ENCODE measurements at regions of chr5 and their contacts with region 1.

Region 1: DNA sequence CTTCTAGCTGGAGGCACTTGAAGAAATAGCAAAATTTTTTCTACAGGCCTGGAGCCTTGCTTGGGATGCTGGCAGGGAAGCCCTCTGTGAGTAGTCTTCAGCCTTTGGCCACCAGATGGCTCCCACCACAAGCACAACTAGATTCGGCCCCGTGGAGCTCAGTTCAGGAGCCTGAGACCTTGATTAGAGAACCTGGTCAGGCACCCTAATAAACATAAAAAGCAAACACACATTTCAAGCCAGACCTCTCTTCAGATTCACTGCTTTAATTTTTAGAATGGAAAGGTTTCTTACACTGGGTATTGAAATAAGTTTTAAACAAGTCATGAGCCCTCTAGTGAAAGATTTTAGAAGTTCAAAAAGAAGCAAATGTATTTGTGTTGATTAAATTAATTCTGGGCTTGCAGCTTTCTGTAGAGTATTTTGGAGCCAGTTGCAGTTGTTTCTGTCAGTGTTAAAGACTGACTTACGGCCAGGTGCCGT is 41.4 kb downstream of the GLRX start:
- DNase-seq: peak; percentile 82
- ATAC-seq: peak; percentile 97
- H3K4me3 Mint-ChIP-seq: no peak overlapping the region
- H3K27ac Mint-ChIP-seq: peak overlapping the region; percentile 14
- H3K4me1 Mint-ChIP-seq: peaks cover 22% of the 10 kb centered on the region
- H3K27me3 Mint-ChIP-seq: no peaks in the 10 kb centered on the region

Region 2: GRCh38 chr5:95646554-95647431 is 134.3 kb before region 1 on chr5 and contains the start of gene RFESD:
- CTCF ChIA-PET with region 1: interaction called, 46 read pairs
- DNase-seq: peak; percentile 98
- ATAC-seq: peak; percentile 97
- H3K4me3 Mint-ChIP-seq: peak within 1 kb of the TSS; percentile 75
- H3K27ac Mint-ChIP-seq: peak within 1 kb of the TSS; percentile 88
- H3K4me1 Mint-ChIP-seq: peaks cover 42% of the 10 kb centered on the region
- H3K27me3 Mint-ChIP-seq: no peaks in the 10 kb centered on the region
- total RNA-seq, gene RFESD: 3.0 to 3.3 TPM

Region 3: DNA sequence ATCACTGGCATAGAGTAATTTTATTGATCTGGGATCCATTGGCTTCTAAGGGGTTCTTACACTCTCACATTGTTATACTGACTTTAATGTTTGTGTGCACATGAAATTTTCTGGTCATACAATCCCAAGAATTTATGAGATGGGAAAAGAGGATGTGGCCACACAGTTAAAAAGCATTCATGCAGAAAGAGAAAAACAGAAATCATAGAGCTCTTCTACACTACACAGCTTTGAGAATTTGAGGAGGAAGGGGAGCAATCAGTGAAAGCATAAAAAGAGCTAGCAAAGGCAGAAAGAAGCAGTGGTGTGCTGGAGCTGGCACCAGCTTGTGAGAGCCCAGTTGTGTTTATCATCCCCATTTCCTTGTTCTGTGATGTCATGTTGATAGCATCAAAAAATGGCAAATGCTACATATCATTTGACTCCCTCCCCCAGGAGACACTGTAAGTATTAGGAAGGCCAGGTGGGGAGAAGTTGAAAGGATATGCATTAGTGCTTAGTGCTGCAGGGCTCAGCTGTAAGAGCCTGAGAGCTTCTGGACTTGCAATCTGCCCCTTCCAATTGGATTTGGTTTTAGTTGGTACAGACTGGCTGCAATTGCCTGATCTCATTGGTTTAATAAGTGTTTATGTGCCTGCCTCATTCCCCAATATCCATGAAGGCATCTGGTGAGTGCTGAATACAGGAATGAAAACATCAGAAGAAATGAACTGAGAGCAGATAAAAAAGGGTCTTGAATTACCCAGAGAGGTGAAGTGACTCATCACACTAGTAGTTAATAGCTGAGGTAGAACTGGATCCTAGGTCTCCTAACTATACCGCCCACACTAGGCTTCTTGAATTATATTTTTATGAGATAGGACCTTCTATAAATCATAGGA is 19.1 kb before region 1 on chr5:
- CTCF ChIA-PET with region 1: interaction called, 13 read pairs
- DNase-seq: no peak
- ATAC-seq: no peak
- H3K4me3 Mint-ChIP-seq: peak overlapping the region; percentile 16
- H3K27ac Mint-ChIP-seq: peak overlapping the region; percentile 42
- H3K4me1 Mint-ChIP-seq: peaks cover 30% of the 10 kb centered on the region
- H3K27me3 Mint-ChIP-seq: peaks cover 13% of the 10 kb centered on the region

Region 4: DNA sequence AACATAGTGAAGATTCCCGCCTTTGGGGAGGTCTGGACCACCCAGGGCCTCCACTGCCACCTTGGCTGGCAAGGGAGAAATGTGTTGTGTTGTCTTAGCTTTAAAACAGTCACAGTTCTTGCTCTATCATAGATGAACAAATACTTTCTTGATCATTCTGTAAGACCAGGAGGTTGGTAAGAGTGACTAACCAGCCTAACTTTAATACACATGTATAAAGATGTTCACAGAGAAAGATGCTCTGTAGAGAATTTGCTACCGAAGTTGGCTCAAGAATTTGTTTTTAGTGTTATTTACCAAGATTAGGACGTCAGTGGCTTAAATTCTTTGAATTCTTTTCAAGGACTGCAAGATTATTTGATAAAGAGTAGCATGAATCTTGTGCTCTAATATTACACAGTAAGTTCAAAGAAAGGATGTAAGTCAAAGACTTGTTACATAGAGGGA is 13.0 kb after region 1 on chr5:
- CTCF ChIA-PET with region 1: interaction called, 40 read pairs
- DNase-seq: no peak
- ATAC-seq: no peak
- H3K4me3 Mint-ChIP-seq: no peak overlapping the region
- H3K27ac Mint-ChIP-seq: no peak overlapping the region
- H3K4me1 Mint-ChIP-seq: peaks cover 8% of the 10 kb centered on the region
- H3K27me3 Mint-ChIP-seq: no peaks in the 10 kb centered on the region

Region 5: GRCh38 chr5:95817440-95817839 is 36.3 kb after region 1 on chr5:
- CTCF ChIA-PET with region 1: interaction called, 26 read pairs
- DNase-seq: peak; percentile 60
- ATAC-seq: peak; percentile 22
- H3K4me3 Mint-ChIP-seq: peak overlapping the region; percentile 66
- H3K27ac Mint-ChIP-seq: peak overlapping the region; percentile 80
- H3K4me1 Mint-ChIP-seq: peaks cover 61% of the 10 kb centered on the region
- H3K27me3 Mint-ChIP-seq: no peaks in the 10 kb centered on the region

Region 6: DNA sequence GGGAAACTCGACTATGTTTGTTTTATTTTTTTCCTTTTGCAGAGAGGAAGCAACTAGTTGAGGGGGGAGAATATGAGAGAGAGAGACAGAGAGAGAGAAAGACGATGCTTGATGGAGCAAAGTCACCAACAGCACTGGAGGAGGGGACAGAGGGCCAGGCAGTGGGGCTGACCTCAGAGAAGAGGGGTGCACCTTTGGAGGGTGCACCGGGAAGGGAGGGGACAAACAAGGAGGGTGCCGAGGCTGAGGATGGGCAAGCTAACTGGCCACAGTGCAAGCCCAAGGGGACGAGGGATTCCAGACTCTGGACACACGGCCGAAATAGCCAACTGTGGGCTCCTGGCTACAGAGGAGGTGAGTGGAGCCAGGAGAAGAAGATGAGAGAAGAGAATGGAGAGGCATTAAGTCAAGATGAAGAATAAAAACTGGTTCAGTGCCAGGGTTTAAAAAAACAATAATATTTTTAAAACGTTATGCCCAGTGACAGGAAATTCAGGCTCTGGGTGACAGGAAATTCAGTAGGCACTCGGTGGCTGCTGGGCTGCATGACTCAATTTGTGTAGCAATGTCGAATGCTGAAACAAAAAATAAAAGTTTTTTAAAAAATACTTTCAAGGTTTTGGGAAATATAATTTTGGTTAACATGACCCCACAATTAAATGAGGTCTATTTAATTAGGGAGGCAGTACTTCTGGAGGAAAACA is 54.7 kb after region 1 on chr5:
- CTCF ChIA-PET with region 1: interaction called, 353 read pairs
- DNase-seq: peak; percentile 57
- ATAC-seq: peak; percentile 13
- H3K4me3 Mint-ChIP-seq: peak overlapping the region; percentile 75
- H3K27ac Mint-ChIP-seq: peak overlapping the region; percentile 90
- H3K4me1 Mint-ChIP-seq: peaks cover 42% of the 10 kb centered on the region
- H3K27me3 Mint-ChIP-seq: no peaks in the 10 kb centered on the region

Region 7: GRCh38 chr5:95858661-95859326 is 77.7 kb after region 1 on chr5:
- CTCF ChIA-PET with region 1: interaction called, 353 read pairs
- DNase-seq: peak; percentile 94
- ATAC-seq: peak; percentile 95
- H3K4me3 Mint-ChIP-seq: peak overlapping the region; percentile 53
- H3K27ac Mint-ChIP-seq: peak overlapping the region; percentile 37
- H3K4me1 Mint-ChIP-seq: peaks cover 44% of the 10 kb centered on the region
- H3K27me3 Mint-ChIP-seq: no peaks in the 10 kb centered on the region

Region 8: DNA sequence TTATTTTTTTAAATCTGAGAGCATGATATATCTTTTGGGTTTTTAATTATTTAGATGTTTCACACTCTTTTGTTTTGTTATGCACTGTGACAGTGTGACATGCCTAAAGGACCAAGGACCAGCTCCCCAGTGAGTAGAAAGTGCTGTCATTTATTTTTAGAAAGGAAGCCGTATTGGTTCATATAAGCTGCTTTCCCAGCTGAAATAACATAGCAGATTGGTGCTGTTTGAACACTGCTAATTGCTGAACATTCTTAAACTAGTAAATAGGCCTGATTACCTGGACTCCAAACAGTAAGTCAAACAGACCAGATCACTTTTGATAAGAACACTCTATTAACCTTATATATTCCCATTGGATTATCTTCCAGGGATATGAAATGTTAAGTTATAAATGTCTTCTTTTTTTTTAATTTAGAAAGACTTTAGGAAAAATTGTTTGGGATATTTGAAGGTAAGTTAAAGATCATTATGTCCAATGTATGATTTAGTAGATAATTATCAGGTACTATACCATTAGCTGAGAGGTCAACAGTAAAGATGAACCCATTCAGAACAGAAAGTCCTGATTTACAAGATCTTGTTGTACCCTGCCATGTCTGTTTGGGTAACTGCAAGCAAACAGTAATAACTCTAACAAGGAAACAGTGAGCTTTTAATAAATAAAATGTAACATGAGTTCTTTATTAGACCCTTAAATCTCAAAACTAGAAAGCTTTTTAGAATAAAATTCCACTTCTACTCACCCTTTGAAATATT is 208.3 kb after region 1 on chr5:
- CTCF ChIA-PET with region 1: no interaction called
- DNase-seq: no peak
- ATAC-seq: no peak
- H3K4me3 Mint-ChIP-seq: no peak overlapping the region
- H3K27ac Mint-ChIP-seq: no peak overlapping the region
- H3K4me1 Mint-ChIP-seq: no peaks in the 10 kb centered on the region
- H3K27me3 Mint-ChIP-seq: peaks cover 11% of the 10 kb centered on the region

Region 9: DNA sequence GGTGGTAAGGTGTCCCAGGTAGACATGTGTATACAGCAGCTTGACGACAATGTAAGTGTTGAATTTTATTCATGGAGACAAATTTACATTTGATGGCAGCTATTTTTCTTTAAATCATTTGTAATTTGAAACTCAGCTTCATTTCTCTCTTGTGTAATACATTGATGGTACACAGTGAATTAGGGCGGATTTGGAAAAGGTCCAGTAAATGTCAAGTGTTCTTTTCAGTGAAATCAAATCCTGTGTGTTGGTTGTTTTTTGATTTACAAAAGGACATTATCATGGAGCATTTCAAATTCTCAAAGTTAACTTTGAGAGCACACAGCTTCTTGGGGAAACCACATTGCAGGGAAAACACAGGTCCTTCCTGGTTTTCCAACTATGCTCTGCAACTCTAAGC is 682.0 kb after region 1 on chr5:
- CTCF ChIA-PET with region 1: no interaction called
- DNase-seq: no peak
- ATAC-seq: no peak
- H3K4me3 Mint-ChIP-seq: no peak overlapping the region
- H3K27ac Mint-ChIP-seq: no peak overlapping the region
- H3K4me1 Mint-ChIP-seq: no peaks in the 10 kb centered on the region
- H3K27me3 Mint-ChIP-seq: peaks cover 25% of the 10 kb centered on the region